ENCODE measurements at regions of chr3 and their contacts with region 1.

Region 1: DNA sequence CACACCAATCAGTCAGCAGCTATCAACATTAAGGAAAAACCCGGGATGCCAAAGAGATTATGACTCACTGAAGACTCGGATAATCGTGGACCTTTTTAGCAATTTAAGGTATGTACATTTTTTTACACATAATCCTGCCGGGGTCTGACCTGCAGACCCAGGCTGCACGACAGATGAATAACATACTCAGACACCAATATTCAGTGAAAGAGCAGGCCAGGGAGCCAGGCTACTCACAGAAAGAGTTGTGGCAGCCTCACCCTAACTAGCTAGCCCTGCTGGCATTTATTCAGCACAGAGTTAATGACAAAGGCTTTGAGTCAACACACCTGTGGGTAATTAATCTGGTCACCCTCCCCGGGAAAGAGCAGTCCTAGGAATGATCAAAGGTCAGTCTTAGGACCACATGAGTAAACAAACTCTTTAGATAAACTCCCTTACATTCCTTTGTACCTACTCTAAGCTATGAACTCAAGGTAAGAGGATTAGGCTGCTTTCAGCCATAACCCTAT is 727.5 kb downstream of the TBL1XR1 start:
- DNase-seq: no peak
- H3K4me3 ChIP-seq: no peak overlapping the region
- H3K27ac ChIP-seq: no peak overlapping the region
- H3K27me3 ChIP-seq: no peaks in the 10 kb centered on the region
- CTCF ChIP-seq: no peak

Region 2: GRCh38 chr3:176167245-176167644 is 302.5 kb before region 1 on chr3:
- CTCF ChIA-PET with region 1: no interaction called
- POLR2A ChIA-PET with region 1: no interaction called
- DNase-seq: no peak
- H3K4me3 ChIP-seq: no peak overlapping the region
- H3K27ac ChIP-seq: no peak overlapping the region
- H3K27me3 ChIP-seq: no peaks in the 10 kb centered on the region
- CTCF ChIP-seq: no peak

Region 3: DNA sequence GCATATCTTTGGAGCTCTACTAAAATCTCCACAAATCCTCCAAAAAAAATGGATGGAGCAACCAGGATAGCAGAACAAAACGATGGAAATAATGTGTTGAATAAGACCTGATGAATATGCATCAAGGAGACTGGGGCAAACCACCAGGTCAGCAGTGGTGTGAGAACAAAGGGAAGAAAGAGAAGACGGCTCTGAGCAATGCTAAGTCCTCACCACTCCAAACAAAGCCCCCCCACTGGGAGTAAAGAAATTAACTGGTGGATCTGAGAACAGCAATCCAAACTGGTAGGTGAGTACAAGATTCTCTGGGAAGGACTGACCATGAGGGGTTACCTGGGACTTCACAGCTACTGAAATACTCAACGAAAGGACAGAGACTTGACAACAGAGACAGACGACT is 249.8 kb before region 1 on chr3:
- CTCF ChIA-PET with region 1: interaction called, 10 read pairs
- POLR2A ChIA-PET with region 1: no interaction called
- DNase-seq: no peak
- H3K4me3 ChIP-seq: no peak overlapping the region
- H3K27ac ChIP-seq: no peak overlapping the region
- H3K27me3 ChIP-seq: no peaks in the 10 kb centered on the region
- CTCF ChIP-seq: no peak

Region 4: GRCh38 chr3:176916777-176917176 is 447.0 kb after region 1 on chr3:
- CTCF ChIA-PET with region 1: no interaction called
- POLR2A ChIA-PET with region 1: no interaction called
- DNase-seq: no peak
- H3K4me3 ChIP-seq: no peak overlapping the region
- H3K27ac ChIP-seq: no peak overlapping the region
- H3K27me3 ChIP-seq: no peaks in the 10 kb centered on the region
- CTCF ChIP-seq: no peak